Activated CD4-positive, alpha-beta memory T cell treated with anti-CD3 and anti-CD28 coated beads for 36 hours (primary cell): ENCODE measurements at regions of chr19 and their contacts with region 1.

Region 1: GRCh38 chr19:37779127-37780005 is at the start of gene ZNF573:
- DNase-seq: peak; percentile 89
- H3K4me3 Mint-ChIP-seq: peak within 1 kb of the TSS; percentile 93
- H3K27ac Mint-ChIP-seq: peak within 1 kb of the TSS; percentile 97
- H3K4me1 Mint-ChIP-seq: peaks cover 31% of the 10 kb centered on the region
- H3K27me3 Mint-ChIP-seq: no peaks in the 10 kb centered on the region
- total RNA-seq, gene ZNF573: 7.7 to 7.8 TPM

Region 2: DNA sequence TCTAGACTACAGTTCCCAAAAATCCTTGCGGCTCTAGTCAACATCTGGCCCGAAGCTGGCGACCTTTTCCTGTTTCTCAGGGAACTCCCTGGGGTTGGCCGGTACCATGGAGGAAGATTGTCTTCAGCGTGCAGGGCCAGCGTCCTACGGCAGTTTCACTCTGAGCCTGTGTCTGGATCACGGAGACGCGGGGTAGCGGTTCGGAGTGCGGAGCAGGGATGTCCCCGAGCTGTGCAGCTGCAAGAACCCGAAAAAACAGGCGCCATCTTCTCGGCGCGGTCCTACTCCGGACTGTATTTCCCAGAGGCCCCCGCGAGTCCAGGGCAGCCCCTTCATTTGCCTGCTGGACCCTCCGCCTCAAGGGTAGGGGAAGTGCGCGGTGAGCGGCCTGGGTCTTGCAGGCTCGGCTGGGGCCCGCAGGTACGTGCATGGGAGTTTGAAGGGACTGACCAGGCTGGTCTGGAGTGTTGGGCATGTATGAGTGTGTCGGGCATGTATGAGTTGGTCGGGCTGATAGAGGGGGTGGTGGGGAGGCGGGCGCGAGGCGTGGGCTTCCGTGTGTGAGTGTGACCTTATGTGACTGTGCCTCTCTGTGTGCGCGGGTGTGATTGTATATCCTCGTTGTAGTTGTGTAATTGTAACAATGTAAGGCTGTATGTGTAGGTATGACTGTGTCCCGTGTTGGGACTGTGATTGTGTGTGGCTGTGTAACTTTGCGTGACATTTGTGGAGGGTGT is 561.3 kb before region 1 on chr19 and contains the start of gene ZNF383:
- CTCF ChIA-PET with region 1: no interaction called
- POLR2A ChIA-PET with region 1: interaction called, 3 read pairs
- intact Hi-C with region 1: loop called (anchors 5 kb)
- DNase-seq: peak; percentile 90
- H3K4me3 Mint-ChIP-seq: peak within 1 kb of the TSS; percentile 99
- H3K27ac Mint-ChIP-seq: peak within 1 kb of the TSS; percentile 99
- H3K4me1 Mint-ChIP-seq: peaks cover 19% of the 10 kb centered on the region
- H3K27me3 Mint-ChIP-seq: no peaks in the 10 kb centered on the region
- total RNA-seq, gene ZNF383: 7.7 TPM

Region 3: DNA sequence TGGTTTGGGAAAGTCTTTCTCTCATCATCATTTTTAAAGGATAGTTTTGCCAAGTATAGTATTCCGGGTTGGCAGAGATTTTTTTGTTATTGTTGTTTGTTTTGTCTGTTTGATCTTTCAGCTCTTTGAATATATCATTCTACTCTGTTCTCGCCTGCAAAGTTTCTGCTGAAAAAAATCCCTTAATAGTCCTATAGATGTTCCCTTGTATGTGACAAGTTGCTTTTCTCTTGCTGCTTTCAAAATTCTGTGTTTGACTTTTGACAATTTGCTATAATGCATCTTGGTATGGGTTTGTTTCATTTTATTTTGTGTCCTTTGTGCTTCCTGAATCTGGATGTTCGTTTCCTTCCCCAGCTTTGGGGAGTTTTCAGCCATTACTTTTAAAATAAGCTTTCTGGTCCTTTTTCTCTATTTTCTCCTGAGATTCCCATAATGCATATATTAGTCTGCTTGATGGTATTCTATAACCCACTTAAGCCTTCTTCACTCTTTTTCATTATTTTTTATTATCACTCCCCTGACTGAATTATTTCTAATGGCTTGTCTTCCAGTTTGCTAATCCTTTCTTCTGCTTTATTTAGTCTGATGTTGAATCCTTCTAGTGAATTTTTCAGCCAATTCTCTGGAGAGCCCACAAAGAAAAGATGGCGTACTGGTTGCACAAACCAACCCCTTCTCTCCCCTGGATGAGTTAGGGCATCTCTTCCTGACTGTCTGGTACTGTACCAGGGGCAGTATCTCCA is 326.7 kb before region 1 on chr19:
- CTCF ChIA-PET with region 1: no interaction called
- POLR2A ChIA-PET with region 1: no interaction called
- intact Hi-C with region 1: no loop called
- DNase-seq: no peak
- H3K4me3 Mint-ChIP-seq: no peak overlapping the region
- H3K27ac Mint-ChIP-seq: no peak overlapping the region
- H3K4me1 Mint-ChIP-seq: no peaks in the 10 kb centered on the region
- H3K27me3 Mint-ChIP-seq: no peaks in the 10 kb centered on the region

Region 4: DNA sequence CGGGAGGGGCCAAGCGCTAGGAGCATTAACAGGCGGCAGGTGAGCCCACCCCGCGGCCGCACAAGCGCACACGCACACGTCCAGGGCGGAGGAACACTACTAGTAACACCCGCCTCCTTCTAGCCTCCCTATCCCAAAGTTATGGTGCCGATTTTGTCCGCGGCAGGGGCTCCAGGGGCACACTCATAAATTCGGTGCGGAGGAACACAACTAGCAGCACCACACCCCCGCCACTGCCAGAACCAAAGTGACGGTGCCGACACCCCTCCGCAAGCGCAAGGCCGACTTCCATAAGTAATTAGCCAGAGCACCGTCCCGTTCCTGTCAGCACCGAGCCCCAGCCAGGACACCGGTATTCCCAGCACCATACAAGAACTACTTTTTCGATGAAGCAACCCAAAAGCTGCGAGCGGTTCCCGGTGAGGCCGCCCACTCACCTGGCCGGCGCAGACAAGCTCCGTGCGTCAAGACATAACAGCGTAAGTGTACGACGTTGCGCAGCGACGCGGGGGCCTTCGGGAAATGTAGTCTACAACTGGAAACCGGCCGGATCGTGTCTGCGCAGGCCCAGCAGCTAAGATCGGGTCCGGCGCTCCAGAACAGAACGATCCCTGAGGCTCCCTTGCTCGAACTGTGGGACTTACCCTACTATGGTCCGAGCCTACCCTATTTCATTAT is 184.9 kb before region 1 on chr19 and contains the starts of genes ZNF540 and ZNF571:
- CTCF ChIA-PET with region 1: no interaction called
- POLR2A ChIA-PET with region 1: interaction called, 9 read pairs
- intact Hi-C with region 1: loop called (anchors 1 kb)
- DNase-seq: peak; percentile 96
- H3K4me3 Mint-ChIP-seq: peak within 1 kb of the TSS; percentile 86
- H3K27ac Mint-ChIP-seq: peak within 1 kb of the TSS; percentile 100
- H3K4me1 Mint-ChIP-seq: peaks cover 31% of the 10 kb centered on the region
- H3K27me3 Mint-ChIP-seq: no peaks in the 10 kb centered on the region
- total RNA-seq, gene ZNF540: 0.86 to 1.1 TPM
- total RNA-seq, gene ZNF571: 2.7 to 4.0 TPM

Region 5: DNA sequence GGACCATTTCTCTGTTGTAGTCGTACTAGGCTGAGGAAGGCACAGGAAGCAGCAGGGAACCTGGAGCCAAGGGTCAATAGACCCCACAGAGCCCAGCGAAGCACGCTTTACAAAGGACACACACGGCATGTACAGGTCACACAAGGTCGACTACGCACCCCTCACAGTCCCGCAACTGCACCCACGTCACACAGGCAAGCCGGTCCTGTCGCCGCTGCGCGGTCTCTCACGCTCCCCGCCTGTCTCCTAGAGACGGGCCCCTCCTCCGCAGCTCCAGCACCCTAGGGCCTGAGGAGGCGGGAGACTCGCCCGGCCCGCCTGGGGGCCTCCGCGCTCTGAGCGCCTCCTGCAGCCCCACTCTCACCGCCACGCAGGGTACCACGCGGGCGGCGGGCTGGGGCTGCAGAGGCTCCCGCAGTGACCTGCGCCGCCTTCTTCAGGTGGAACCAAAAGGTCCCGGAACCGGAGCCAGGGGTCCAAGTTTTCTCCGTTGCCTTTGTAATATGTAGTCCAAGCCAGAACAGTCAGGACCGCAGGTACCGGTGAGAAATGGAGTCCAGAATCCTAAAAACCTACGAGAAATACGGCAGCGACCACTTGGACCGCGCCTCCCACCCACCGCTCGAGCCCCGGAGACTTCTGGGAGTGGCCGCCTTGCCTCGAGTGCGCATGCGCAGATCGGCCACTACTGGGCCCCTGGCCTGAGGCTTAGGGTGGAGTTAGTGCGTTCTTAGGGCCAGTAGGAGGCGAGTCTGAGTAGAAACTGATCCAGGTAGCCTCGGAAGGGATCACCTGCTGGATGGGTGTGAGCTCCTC is 60.0 kb before region 1 on chr19 and contains the start of gene ZNF607:
- CTCF ChIA-PET with region 1: no interaction called
- POLR2A ChIA-PET with region 1: interaction called, 5 read pairs
- intact Hi-C with region 1: loop called (anchors 1 kb)
- DNase-seq: peak; percentile 92
- H3K4me3 Mint-ChIP-seq: peak within 1 kb of the TSS; percentile 89
- H3K27ac Mint-ChIP-seq: peak within 1 kb of the TSS; percentile 82
- H3K4me1 Mint-ChIP-seq: peaks cover 13% of the 10 kb centered on the region
- H3K27me3 Mint-ChIP-seq: no peaks in the 10 kb centered on the region
- total RNA-seq, gene ZNF607: 5.3 to 7.0 TPM

Region 6: DNA sequence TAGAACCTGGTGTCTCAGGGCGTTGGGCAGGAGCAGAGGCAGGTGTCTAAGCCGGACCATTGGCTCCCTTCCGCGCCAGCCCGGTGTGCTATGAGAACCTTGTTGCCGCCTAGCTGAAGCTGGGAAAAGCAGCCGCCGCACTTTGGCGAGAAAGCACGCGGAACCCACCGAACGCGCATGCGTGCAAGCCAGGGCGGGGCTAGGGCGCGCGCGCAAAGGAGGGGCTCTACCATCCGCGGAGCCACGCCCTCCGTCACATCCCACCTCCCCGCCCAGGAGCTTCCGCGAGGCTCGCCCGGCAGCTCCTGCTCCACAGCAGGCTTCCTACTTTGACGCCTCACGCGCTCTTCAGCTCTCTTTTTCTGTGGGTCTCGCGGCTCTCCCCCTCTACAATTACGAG is 75.7 kb after region 1 on chr19:
- CTCF ChIA-PET with region 1: no interaction called
- POLR2A ChIA-PET with region 1: no interaction called
- intact Hi-C with region 1: no loop called
- DNase-seq: peak; percentile 17
- H3K4me3 Mint-ChIP-seq: no peak overlapping the region
- H3K27ac Mint-ChIP-seq: no peak overlapping the region
- H3K4me1 Mint-ChIP-seq: no peaks in the 10 kb centered on the region
- H3K27me3 Mint-ChIP-seq: peaks cover 6% of the 10 kb centered on the region

Region 7: DNA sequence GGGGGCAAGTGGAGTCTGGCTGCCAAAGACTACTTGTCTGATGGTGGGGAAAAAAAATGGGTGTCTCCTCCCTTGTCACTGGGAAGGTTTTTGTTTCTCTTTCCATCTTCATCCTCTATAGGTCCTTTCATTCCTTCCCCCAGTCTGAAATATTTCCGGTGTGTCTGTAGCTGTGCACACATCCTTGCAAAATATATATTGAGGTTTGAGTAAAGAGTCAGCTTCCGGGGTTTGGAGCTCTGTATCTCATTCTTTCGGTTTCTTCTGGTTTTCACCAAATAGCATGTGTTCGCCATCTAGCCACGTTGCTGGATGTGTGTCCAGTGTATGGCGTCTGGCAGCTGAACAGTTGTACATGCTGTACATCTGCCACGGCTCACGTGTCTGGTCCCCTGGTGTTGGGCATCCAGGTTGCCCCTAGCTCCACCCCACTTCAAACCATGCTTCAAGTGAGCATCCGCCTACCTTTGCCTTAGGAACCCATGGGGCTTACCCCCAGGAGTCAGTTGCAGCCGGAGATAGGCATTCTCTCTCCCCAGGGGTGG is 269.8 kb after region 1 on chr19:
- CTCF ChIA-PET with region 1: no interaction called
- POLR2A ChIA-PET with region 1: no interaction called
- intact Hi-C with region 1: loop called (anchors 5 kb)
- DNase-seq: peak; percentile 74
- H3K4me3 Mint-ChIP-seq: peak overlapping the region; percentile 68
- H3K27ac Mint-ChIP-seq: peak overlapping the region; percentile 96
- H3K4me1 Mint-ChIP-seq: peaks cover 46% of the 10 kb centered on the region
- H3K27me3 Mint-ChIP-seq: no peaks in the 10 kb centered on the region